SK-N-SH (cell line): ENCODE measurements at regions of chr5 and their contacts with region 1.

Region 1: GRCh38 chr5:57499262-57500050 is 16.8 kb upstream of the ACTBL2 start:
- DNase-seq: peak; percentile 36
- H3K4me3 ChIP-seq: no peak overlapping the region
- H3K27ac ChIP-seq: peak overlapping the region; percentile 4 to 56; a peak in 3 of 4 replicates
- H3K4me1 ChIP-seq: peaks cover 20 to 23% of the 10 kb centered on the region in 2 experiments
- H3K27me3 ChIP-seq: no peaks in the 10 kb centered on the region
- CTCF ChIP-seq: peak; percentile 88
- EP300 ChIP-seq: no peak
- RAD21 ChIP-seq: peak; percentile 81

Region 2: GRCh38 chr5:57488215-57488955 is 11.1 kb before region 1 on chr5:
- CTCF ChIA-PET with region 1: interaction called, 12 read pairs
- POLR2A ChIA-PET with region 1: no interaction called
- DNase-seq: no peak
- H3K4me3 ChIP-seq: no peak overlapping the region; a peak in 1 of 4 replicates
- H3K27ac ChIP-seq: peak overlapping the region; percentile 87 to 91
- H3K4me1 ChIP-seq: peaks cover 16 to 21% of the 10 kb centered on the region in 2 experiments
- H3K27me3 ChIP-seq: no peaks in the 10 kb centered on the region
- CTCF ChIP-seq: no peak
- EP300 ChIP-seq: peak; percentile 41 to 82; a peak in 2 of 4 replicates
- RAD21 ChIP-seq: no peak

Region 3: GRCh38 chr5:57513785-57514184 is 14.3 kb after region 1 on chr5:
- CTCF ChIA-PET with region 1: interaction called, 26 read pairs
- POLR2A ChIA-PET with region 1: no interaction called
- DNase-seq: no peak
- H3K4me3 ChIP-seq: no peak overlapping the region
- H3K27ac ChIP-seq: no peak overlapping the region
- H3K4me1 ChIP-seq: no peaks in the 10 kb centered on the region; a peak in 1 of 4 replicates
- H3K27me3 ChIP-seq: no peaks in the 10 kb centered on the region
- CTCF ChIP-seq: no peak
- EP300 ChIP-seq: no peak
- RAD21 ChIP-seq: no peak

Region 4: DNA sequence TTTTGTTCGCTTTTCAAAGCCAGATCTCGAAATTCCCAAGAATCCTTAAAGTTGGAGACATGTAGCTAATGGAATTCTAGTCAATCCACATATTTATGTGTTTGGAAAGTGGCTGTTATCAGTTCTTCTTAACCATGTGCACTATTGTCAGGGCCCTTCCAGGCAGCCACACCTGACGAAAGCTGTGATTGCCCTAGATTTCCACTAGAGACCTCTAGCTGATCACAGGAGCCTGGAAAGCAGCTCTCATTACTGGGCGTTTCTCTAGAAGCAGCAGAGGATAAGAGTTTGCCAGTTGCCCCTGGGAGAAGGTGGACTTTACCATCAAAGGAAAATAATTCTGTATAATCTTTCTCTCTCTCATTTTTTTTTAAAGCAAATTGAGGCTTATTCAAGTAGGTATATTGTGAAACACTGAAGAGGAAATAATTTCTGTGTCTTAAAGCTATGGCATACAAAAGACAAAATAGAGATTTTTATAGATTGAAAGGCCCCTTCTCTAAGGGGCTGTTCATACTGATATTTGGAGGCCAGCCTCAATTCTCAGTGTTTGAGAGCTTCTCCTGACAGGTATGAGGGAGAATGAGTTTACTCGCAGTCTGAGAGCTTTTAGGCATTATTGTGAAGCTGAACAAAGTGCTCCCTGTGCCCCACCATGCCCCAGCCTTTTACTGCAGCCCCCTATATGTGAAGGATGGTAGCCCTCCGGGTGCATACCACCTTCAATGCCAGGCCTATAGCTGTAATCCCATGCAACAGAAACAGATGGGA is 388.6 kb after region 1 on chr5:
- CTCF ChIA-PET with region 1: interaction called, 15 read pairs
- POLR2A ChIA-PET with region 1: no interaction called
- DNase-seq: peak; percentile 61
- H3K4me3 ChIP-seq: no peak overlapping the region
- H3K27ac ChIP-seq: peak overlapping the region in 1 of 2 experiments; percentile 12; a peak in 2 of 4 replicates
- H3K4me1 ChIP-seq: peaks cover 3 to 18% of the 10 kb centered on the region in 2 experiments; a peak in 3 of 4 replicates
- H3K27me3 ChIP-seq: no peaks in the 10 kb centered on the region
- CTCF ChIP-seq: peak; percentile 66
- EP300 ChIP-seq: no peak
- RAD21 ChIP-seq: peak; percentile 92

Region 5: DNA sequence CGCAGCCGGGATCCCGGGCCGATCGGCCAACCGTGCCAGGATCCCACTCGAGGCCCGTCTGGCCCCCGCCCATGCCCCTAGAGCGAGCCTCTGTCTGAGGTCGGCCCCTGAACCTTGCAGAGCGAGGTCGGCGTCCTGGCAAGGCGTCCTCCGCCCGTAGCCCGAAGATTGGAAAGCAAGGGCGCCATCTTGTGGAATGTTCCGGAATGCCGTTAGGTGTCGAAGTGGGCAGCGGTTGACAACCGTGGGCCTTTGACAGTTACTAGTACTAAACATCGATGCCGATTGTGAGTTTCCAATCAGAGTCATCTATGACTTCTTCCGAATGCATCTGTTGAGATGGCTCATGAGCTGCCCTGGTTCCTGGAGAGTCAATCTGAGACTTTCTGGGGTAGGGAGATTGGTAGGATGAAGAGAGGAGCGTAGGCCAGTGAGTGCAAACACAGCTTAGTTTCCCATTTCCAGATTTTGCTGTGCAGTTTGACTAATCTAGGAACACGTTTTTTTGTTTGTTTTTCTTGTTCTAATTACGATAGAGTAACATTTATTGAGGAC is 961.4 kb after region 1 on chr5:
- CTCF ChIA-PET with region 1: interaction called, 59 read pairs
- POLR2A ChIA-PET with region 1: no interaction called
- DNase-seq: peak; percentile 83
- H3K4me3 ChIP-seq: peak overlapping the region; percentile 90 to 93
- H3K27ac ChIP-seq: peak overlapping the region; percentile 85 to 87
- H3K4me1 ChIP-seq: peaks cover 0 to 7% of the 10 kb centered on the region in 2 experiments; a peak in 2 of 4 replicates
- H3K27me3 ChIP-seq: no peaks in the 10 kb centered on the region
- CTCF ChIP-seq: peak; percentile 76
- EP300 ChIP-seq: 0 out of 4 replicates have a peak, but pooled peaks of 1 of the 2 experiments have one; percentile 14
- RAD21 ChIP-seq: peak; percentile 95